GM12878 (cell line): ENCODE measurements at regions of chr7 and their contacts with region 1.

Region 1: GRCh38 chr7:29408841-29409243 is 154.8 kb upstream of the PRR15 start:
- DNase-seq: peak; percentile 21
- ATAC-seq: peak; percentile 84
- H3K4me3 ChIP-seq: no peak overlapping the region
- H3K27ac ChIP-seq: no peak overlapping the region
- H3K4me1 ChIP-seq: no peaks in the 10 kb centered on the region
- H3K27me3 ChIP-seq: no peaks in the 10 kb centered on the region; a peak in 1 of 4 replicates
- CTCF ChIP-seq: peak; percentile 67 to 85 (median 83)
- EP300 ChIP-seq: no peak
- POLR2A ChIP-seq: no peak
- RAD21 ChIP-seq: peak; percentile 87

Region 2: GRCh38 chr7:28926871-28927597 is 481.8 kb before region 1 on chr7:
- CTCF ChIA-PET with region 1: interaction called, 59 read pairs
- POLR2A ChIA-PET with region 1: no interaction called
- RAD21 ChIA-PET with region 1: interaction called, 24 read pairs
- SMC1A ChIA-PET with region 1: interaction called, 85 read pairs
- in situ Hi-C with region 1: loop called (anchors 5 kb)
- intact Hi-C with region 1: loop called (anchors 1 kb)
- DNase-seq: peak; percentile 16
- ATAC-seq: peak; percentile 98
- H3K4me3 ChIP-seq: no peak overlapping the region
- H3K27ac ChIP-seq: no peak overlapping the region
- H3K4me1 ChIP-seq: peaks cover 5% of the 10 kb centered on the region; the same call in 1 of the 2 replicates
- H3K27me3 ChIP-seq: peaks cover 0 to 1% of the 10 kb centered on the region in 2 experiments; a peak in 1 of 4 replicates
- CTCF ChIP-seq: peak; percentile 66 to 83 (median 78)
- EP300 ChIP-seq: no peak
- POLR2A ChIP-seq: no peak
- RAD21 ChIP-seq: peak; percentile 67

Region 3: GRCh38 chr7:29105752-29106668 is 302.8 kb before region 1 on chr7:
- CTCF ChIA-PET with region 1: interaction called, 17 read pairs
- POLR2A ChIA-PET with region 1: no interaction called
- RAD21 ChIA-PET with region 1: interaction called, 9 read pairs
- SMC1A ChIA-PET with region 1: interaction called, 5 read pairs
- in situ Hi-C with region 1: no loop called
- intact Hi-C with region 1: loop called (anchors 1 kb)
- DNase-seq: no peak
- ATAC-seq: peak; percentile 88
- H3K4me3 ChIP-seq: no peak overlapping the region
- H3K27ac ChIP-seq: no peak overlapping the region
- H3K4me1 ChIP-seq: no peaks in the 10 kb centered on the region
- H3K27me3 ChIP-seq: peaks cover 3% of the 10 kb centered on the region in 2 experiments; a peak in 2 of 4 replicates
- CTCF ChIP-seq: peak; percentile 73 to 80 (median 79)
- EP300 ChIP-seq: no peak
- POLR2A ChIP-seq: no peak
- RAD21 ChIP-seq: peak; percentile 79

Region 4: GRCh38 chr7:29113384-29114103 is 295.3 kb before region 1 on chr7:
- CTCF ChIA-PET with region 1: interaction called, 17 read pairs
- POLR2A ChIA-PET with region 1: no interaction called
- RAD21 ChIA-PET with region 1: interaction called, 4 read pairs
- SMC1A ChIA-PET with region 1: interaction called, 5 read pairs
- in situ Hi-C with region 1: no loop called
- intact Hi-C with region 1: loop called (anchors 2 kb)
- DNase-seq: no peak
- ATAC-seq: peak; percentile 50
- H3K4me3 ChIP-seq: no peak overlapping the region
- H3K27ac ChIP-seq: no peak overlapping the region
- H3K4me1 ChIP-seq: no peaks in the 10 kb centered on the region
- H3K27me3 ChIP-seq: peaks cover 1 to 3% of the 10 kb centered on the region in 2 experiments; a peak in 2 of 4 replicates
- CTCF ChIP-seq: peak in 2 of 3 experiments; percentile 27 to 35; a peak in 2 of 6 replicates
- EP300 ChIP-seq: no peak
- POLR2A ChIP-seq: no peak
- RAD21 ChIP-seq: peak; percentile 16; the same call in 1 of the 2 replicates

Region 5: GRCh38 chr7:29189743-29190201 is 219.1 kb before region 1 on chr7:
- CTCF ChIA-PET with region 1: interaction called, 112 read pairs
- POLR2A ChIA-PET with region 1: no interaction called
- RAD21 ChIA-PET with region 1: interaction called, 31 read pairs
- SMC1A ChIA-PET with region 1: interaction called, 77 read pairs
- in situ Hi-C with region 1: loop called (anchors 5 kb)
- intact Hi-C with region 1: loop called (anchors 1 kb)
- DNase-seq: no peak
- ATAC-seq: peak; percentile 95
- H3K4me3 ChIP-seq: no peak overlapping the region
- H3K27ac ChIP-seq: no peak overlapping the region
- H3K4me1 ChIP-seq: no peaks in the 10 kb centered on the region
- H3K27me3 ChIP-seq: peaks cover 0 to 10% of the 10 kb centered on the region in 2 experiments; a peak in 3 of 4 replicates
- CTCF ChIP-seq: peak; percentile 77 to 86 (median 81)
- EP300 ChIP-seq: no peak
- POLR2A ChIP-seq: no peak
- RAD21 ChIP-seq: peak; percentile 66

Region 6: DNA sequence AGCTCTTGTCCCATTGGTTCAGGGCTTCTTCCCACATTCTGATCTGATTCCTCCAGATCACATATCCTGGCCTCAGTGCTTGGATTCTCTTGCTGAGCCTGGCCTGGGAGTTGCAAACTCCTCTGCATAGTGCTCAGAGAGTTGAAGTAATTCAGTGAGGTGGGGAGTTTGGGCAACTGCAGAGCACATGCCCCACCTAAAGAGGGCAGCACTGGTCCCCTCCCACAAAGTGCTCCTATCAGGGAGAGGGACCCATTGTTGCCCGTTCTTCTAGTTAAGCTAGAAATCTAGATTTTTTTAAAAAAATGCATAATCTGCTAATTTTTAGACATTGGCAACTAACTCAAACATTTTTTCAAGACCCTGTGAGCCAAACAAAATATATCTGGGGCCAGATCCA is 169.2 kb before region 1 on chr7:
- CTCF ChIA-PET with region 1: interaction called, 20 read pairs
- POLR2A ChIA-PET with region 1: no interaction called
- RAD21 ChIA-PET with region 1: interaction called, 6 read pairs
- SMC1A ChIA-PET with region 1: interaction called, 4 read pairs
- in situ Hi-C with region 1: no loop called
- intact Hi-C with region 1: loop called (anchors 2 kb)
- DNase-seq: no peak
- ATAC-seq: peak; percentile 63
- H3K4me3 ChIP-seq: no peak overlapping the region
- H3K27ac ChIP-seq: no peak overlapping the region
- H3K4me1 ChIP-seq: no peaks in the 10 kb centered on the region
- H3K27me3 ChIP-seq: no peaks in the 10 kb centered on the region
- CTCF ChIP-seq: peak; percentile 50 to 67 (median 56)
- EP300 ChIP-seq: no peak
- POLR2A ChIP-seq: no peak
- RAD21 ChIP-seq: no peak

Region 7: GRCh38 chr7:29319719-29320521 is 88.9 kb before region 1 on chr7:
- CTCF ChIA-PET with region 1: interaction called, 4 read pairs
- POLR2A ChIA-PET with region 1: no interaction called
- RAD21 ChIA-PET with region 1: interaction called, 3 read pairs
- SMC1A ChIA-PET with region 1: interaction called, 3 read pairs
- in situ Hi-C with region 1: no loop called
- intact Hi-C with region 1: loop called (anchors 5 kb)
- DNase-seq: peak; percentile 27
- ATAC-seq: peak; percentile 98
- H3K4me3 ChIP-seq: no peak overlapping the region
- H3K27ac ChIP-seq: no peak overlapping the region
- H3K4me1 ChIP-seq: no peaks in the 10 kb centered on the region
- H3K27me3 ChIP-seq: no peaks in the 10 kb centered on the region; a peak in 2 of 4 replicates
- CTCF ChIP-seq: no peak
- EP300 ChIP-seq: peak; percentile 42 to 45; a peak in 1 of 4 replicates
- POLR2A ChIP-seq: no peak
- RAD21 ChIP-seq: no peak